Activated naive CD4-positive, alpha-beta T cell treated with anti-CD3 and anti-CD28 coated beads for 36 hours (primary cell): ENCODE measurements at regions of chr13 and their contacts with region 1.

Region 1: GRCh38 chr13:27130979-27131623 is 40.5 kb downstream of the USP12 start:
- DNase-seq: peak; percentile 89
- H3K4me3 Mint-ChIP-seq: no peak overlapping the region
- H3K27ac Mint-ChIP-seq: peak overlapping the region; percentile 91
- H3K4me1 Mint-ChIP-seq: peaks cover 88% of the 10 kb centered on the region
- H3K27me3 Mint-ChIP-seq: no peaks in the 10 kb centered on the region

Region 2: GRCh38 chr13:27022571-27023311 is 108.4 kb before region 1 on chr13:
- CTCF ChIA-PET with region 1: no interaction called
- intact Hi-C with region 1: loop called (anchors 1 kb)
- DNase-seq: no peak
- H3K4me3 Mint-ChIP-seq: no peak overlapping the region
- H3K27ac Mint-ChIP-seq: no peak overlapping the region
- H3K4me1 Mint-ChIP-seq: peaks cover 3% of the 10 kb centered on the region
- H3K27me3 Mint-ChIP-seq: peaks cover 12% of the 10 kb centered on the region

Region 3: GRCh38 chr13:27112006-27112405 is 19.1 kb before region 1 on chr13:
- CTCF ChIA-PET with region 1: no interaction called
- intact Hi-C with region 1: loop called (anchors 1 kb)
- DNase-seq: peak; percentile 16
- H3K4me3 Mint-ChIP-seq: no peak overlapping the region
- H3K27ac Mint-ChIP-seq: no peak overlapping the region
- H3K4me1 Mint-ChIP-seq: peaks cover 29% of the 10 kb centered on the region
- H3K27me3 Mint-ChIP-seq: no peaks in the 10 kb centered on the region

Region 4: DNA sequence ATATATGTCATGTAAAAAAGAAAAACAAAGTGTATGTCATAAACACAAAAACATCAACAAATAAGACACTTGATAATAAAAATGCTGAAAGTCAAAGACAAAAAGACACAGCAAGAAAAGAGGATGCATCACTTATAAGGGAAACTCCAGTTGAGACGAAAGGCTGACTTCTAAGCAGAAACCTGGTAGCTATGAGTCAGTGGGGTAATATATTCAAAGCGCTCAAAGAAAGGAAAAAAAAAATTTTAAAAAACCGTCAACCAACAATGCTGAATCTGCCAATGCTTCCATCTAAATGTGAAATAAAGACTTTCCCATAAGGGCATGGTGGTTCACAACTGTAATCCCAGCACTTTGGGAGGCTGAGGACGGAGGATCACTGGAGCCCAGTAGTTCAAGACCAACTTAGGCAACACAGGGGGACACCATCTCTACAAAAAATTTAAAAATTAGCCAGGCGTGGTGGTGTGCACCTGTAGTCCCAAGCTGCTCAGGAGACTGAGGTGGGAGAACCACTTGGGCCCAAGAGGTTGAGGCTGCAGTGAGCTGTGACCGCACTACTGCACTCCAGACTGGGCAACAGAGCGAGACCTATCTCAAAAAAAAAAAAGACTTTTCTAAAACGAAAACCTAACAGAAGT is 16.5 kb after region 1 on chr13:
- CTCF ChIA-PET with region 1: interaction called, 6 read pairs
- intact Hi-C with region 1: loop called (anchors 1 kb)
- DNase-seq: no peak
- H3K4me3 Mint-ChIP-seq: peak overlapping the region; percentile 56
- H3K27ac Mint-ChIP-seq: peak overlapping the region; percentile 93
- H3K4me1 Mint-ChIP-seq: peaks cover 81% of the 10 kb centered on the region
- H3K27me3 Mint-ChIP-seq: no peaks in the 10 kb centered on the region

Region 5: DNA sequence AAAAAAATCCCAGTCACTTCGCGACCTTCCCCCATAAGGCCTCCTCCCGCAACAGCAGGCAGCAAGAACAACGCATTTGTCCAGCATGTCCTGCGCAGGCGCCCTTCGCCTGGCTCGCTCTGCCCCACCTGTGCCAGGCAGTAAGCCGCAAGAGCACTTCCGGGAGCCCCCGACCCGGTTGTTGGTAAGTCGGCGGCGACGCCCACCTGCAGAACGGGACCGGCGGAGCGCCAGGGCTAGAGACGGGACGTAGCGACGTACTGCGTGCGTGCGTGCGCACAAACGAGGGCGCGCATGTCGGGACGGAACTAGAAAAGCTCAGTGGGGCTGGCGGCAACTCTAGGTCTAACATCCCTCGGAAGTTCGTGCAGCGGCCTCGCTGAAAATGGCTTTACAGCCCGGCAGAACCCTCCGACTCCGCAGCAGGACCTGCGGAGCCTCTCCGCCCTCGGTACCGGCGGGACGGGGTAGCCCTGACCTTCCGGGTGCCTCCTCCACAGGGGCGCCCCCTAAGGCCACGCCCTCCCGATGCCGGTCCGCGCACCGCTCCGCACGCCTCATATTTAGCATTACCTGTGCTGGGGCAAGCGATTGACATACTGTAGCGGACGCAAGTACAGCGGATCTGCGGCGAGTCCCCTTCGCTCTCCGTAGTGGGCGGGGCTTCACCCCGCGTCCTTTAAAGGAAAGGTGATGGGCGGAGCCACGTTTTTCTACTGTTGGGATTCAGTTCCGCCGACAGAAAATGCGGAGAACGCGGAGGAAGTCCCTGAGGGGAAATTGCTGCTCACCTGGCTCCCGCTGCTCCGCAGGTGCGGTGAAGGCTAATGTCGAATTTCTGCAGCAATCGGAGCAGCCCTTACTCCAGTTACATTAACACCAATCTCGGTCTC is 319.1 kb after region 1 on chr13 and contains the start of gene MTIF3:
- CTCF ChIA-PET with region 1: no interaction called
- intact Hi-C with region 1: loop called (anchors 5 kb)
- DNase-seq: peak; percentile 97
- H3K4me3 Mint-ChIP-seq: peak within 1 kb of the TSS; percentile 94
- H3K27ac Mint-ChIP-seq: peak within 1 kb of the TSS; percentile 99
- H3K4me1 Mint-ChIP-seq: peaks cover 55% of the 10 kb centered on the region
- H3K27me3 Mint-ChIP-seq: no peaks in the 10 kb centered on the region
- total RNA-seq, gene MTIF3: 34.0 to 42.1 TPM